ENCODE measurements at regions of chr17 and their contacts with region 1.

Region 1: GRCh38 chr17:55607731-55608341 is 96.6 kb upstream of the SMIM36 start:
- DNase-seq: no peak
- ATAC-seq: no peak
- H3K4me3 ChIP-seq: no peak overlapping the region
- H3K4me3 Mint-ChIP-seq: no peak overlapping the region
- H3K27ac ChIP-seq: no peak overlapping the region
- H3K27ac Mint-ChIP-seq: no peak overlapping the region
- H3K4me1 ChIP-seq: no peaks in the 10 kb centered on the region
- H3K4me1 Mint-ChIP-seq: no peaks in the 10 kb centered on the region
- H3K27me3 ChIP-seq: peaks cover 0 to 5% of the 10 kb centered on the region in 2 experiments
- H3K27me3 Mint-ChIP-seq: peaks cover 9 to 13% of the 10 kb centered on the region in 2 donors

Region 2: DNA sequence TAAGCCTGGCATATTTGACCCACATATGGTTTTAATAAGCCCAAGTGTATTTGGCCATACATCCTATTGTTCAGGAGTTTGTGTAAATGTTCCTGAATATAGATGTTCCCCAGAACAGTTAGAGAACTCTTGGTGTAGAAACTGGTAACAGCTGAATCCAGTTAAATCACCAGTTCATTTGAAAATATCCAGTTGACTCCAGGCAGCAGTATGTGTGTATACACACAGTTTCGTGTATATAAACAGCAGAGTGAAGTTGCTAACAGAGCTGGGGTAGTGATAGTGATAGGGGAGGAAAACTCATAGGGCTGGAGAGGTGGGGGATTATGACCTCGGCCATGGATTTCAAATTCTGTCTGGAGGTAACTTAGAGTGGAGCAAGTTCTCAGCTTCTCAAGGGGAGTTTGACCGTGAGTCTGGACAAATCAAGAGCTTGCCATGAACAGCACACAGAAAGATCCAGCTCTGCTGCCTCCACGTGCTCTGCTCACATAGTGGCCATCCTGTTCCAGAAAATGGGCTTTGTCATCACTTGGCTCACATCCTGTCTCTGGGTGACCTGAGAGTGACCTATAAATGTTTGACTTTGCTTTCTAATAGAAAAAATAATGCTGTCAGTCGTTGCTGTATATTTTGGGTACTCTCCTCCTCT is 155.6 kb before region 1 on chr17:
- CTCF ChIA-PET with region 1: no interaction called
- POLR2A ChIA-PET with region 1: no interaction called
- DNase-seq: no peak
- ATAC-seq: no peak
- H3K4me3 ChIP-seq: no peak overlapping the region
- H3K4me3 Mint-ChIP-seq: no peak overlapping the region
- H3K27ac ChIP-seq: no peak overlapping the region
- H3K27ac Mint-ChIP-seq: no peak overlapping the region
- H3K4me1 ChIP-seq: peaks cover 0 to 3% of the 10 kb centered on the region in 2 experiments
- H3K4me1 Mint-ChIP-seq: peaks cover 0 to 7% (median 2%) of the 10 kb centered on the region in 3 donors
- H3K27me3 ChIP-seq: no peaks in the 10 kb centered on the region
- H3K27me3 Mint-ChIP-seq: peaks cover 6 to 11% of the 10 kb centered on the region in 2 donors

Region 3: DNA sequence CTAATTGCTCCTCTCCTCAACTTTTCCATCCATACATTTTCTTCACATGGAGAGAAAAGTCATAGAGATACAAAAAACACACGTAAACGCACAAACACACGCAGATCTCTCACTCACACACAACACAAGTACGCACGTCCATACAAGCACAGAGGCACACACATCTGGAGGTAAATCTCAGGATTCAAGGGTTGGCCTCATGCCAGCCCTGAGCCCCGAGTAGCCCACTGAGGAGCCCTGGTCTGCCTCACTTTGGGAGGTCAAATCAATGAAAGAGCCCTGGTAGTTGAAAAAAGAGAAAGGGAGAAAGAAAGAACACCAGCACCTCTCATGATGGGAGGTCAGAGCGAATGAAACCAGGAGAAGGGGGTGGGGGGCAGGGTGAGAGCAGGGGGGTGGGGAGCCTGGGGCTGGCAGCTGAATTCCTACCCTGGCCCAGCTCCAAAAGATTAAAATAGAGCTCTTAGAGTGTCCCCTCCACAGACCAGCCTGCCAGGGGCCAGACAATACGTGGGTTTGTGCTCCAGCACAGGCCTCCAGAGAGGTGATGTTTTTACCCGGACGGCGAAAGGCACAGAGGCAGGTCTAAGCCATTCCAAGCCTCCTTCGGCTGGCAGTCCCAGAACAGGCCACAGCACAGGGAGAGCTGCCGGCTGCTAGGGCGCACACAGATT is 913.4 kb after region 1 on chr17:
- CTCF ChIA-PET with region 1: no interaction called
- POLR2A ChIA-PET with region 1: interaction called in 1 of 2 experiments, 14 read pairs
- DNase-seq: no peak
- ATAC-seq: no peak
- H3K4me3 ChIP-seq: no peak overlapping the region
- H3K4me3 Mint-ChIP-seq: no peak overlapping the region
- H3K27ac ChIP-seq: no peak overlapping the region
- H3K27ac Mint-ChIP-seq: no peak overlapping the region
- H3K4me1 ChIP-seq: no peaks in the 10 kb centered on the region
- H3K4me1 Mint-ChIP-seq: no peaks in the 10 kb centered on the region
- H3K27me3 ChIP-seq: peaks cover 0 to 11% of the 10 kb centered on the region in 2 experiments
- H3K27me3 Mint-ChIP-seq: peaks cover 16 to 20% of the 10 kb centered on the region in 2 donors

Measured in T-cell (primary cell).